Right lobe of liver (tissue), 6 donors: ENCODE measurements at regions of chr1 and their contacts with region 1.

Region 1: DNA sequence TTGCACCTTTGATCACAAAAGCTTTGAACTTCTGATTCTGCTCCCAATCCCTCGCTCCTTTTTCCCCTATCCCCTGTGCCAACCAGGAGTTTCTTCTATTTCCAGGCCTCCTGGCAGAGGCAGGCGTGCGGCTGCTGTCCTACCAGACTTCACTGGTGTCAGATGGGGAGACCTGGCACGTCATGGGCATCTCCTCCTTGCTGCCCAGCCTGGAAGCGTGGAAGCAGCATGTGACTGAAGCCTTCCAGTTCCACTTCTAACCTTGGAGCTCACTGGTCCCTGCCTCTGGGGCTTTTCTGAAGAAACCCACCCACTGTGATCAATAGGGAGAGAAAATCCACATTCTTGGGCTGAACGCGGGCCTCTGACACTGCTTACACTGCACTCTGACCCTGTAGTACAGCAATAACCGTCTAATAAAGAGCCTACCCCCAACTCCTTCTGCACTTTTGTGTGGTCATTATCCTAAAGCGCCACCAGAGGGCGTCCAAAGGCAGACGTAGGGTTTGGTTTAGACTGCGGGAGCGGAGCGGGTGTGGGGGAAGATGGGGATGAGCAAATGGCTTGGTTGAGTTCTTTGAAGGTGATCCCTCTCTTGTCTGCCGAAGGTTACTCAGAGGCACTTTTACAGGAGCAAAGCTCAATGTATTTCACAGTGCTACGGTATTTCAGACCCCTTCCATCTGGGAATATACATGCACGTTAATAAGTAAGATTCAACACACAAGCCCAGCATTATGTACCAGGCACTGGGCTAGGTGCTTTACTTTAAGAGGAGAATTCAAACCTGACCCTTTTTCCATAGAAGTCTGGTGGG is 24.7 kb downstream of the HMGCS2 start:
- DNase-seq: peak; percentile 64 to 77 (median 75)
- ATAC-seq: peak; percentile 72 to 75 (median 74)
- H3K4me3 ChIP-seq: no peak overlapping the region
- H3K27ac ChIP-seq: peak overlapping the region in 2 of 3 donors; percentile 3 to 45
- H3K4me1 ChIP-seq: peaks cover 0 to 54% (median 14%) of the 10 kb centered on the region in 4 donors
- H3K27me3 ChIP-seq: no peaks in the 10 kb centered on the region
- CTCF ChIP-seq: peak; percentile 76 to 86 (median 84)
- POLR2A ChIP-seq: no peak

Region 2: DNA sequence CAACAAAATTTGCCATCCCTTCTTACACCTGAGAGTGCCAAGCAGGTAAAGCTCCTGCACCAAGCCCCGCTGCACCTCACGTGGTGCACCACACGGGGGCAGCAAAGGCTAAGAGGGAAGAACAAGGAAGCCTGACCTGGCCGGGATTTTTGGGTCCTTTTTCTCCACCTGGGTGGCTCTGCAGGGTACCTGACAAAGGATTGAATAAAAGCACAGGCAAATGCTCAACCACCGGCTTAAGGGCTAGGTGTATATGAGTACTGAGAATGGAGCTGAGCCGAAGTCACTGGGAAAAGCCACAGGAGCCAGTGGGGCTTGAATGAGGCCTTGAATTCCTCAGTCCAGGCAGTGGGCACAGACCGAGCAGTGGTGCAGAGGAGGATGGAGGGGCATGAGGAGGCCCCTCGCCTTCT is 132.3 kb before region 1 on chr1:
- intact Hi-C with region 1: no loop called
- DNase-seq: peak; percentile 81 to 88 (median 84)
- ATAC-seq: peak; percentile 84 to 89 (median 86)
- H3K4me3 ChIP-seq: no peak overlapping the region
- H3K27ac ChIP-seq: no peak overlapping the region
- H3K4me1 ChIP-seq: no peaks in the 10 kb centered on the region
- H3K27me3 ChIP-seq: no peaks in the 10 kb centered on the region
- CTCF ChIP-seq: peak; percentile 84 to 96 (median 94)
- POLR2A ChIP-seq: no peak

Region 3: DNA sequence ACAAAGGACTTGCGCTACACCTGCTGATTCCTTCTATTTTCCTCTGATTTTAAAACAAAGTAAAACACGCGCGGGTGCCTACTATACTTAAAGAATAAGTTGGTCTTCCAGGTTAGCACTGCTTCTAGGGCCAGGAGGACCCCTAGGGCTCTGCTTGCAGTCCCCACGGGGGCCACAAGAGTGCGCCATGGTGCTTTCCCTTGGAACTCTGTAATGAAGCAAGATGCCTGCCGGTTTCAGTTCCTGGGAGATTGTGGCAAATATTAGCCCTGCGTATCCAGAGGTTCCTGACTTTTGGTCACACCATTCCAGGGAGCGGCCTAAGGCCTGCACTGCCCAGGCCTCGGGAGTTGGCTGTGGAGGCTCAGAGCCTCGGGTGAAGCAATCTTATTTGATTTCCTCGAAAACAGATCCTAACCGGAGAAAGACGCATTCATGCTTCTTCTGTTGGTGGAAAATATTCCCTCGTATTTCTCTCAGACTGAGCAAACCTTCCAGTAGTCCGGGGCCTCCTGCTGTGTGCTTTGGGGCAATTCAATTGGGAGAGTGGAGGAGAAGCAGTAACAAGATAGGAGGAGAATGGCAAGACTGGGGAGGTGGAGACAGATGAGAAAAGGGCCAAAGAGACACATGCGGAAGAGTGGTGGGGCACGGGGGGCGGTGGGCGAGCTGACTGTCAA is 127.1 kb after region 1 on chr1:
- intact Hi-C with region 1: loop called in 1 of 2 experiments (anchors 10 kb)
- DNase-seq: peak; percentile 65 to 80 (median 68)
- ATAC-seq: peak; percentile 95 to 97 (median 96)
- H3K4me3 ChIP-seq: no peak overlapping the region
- H3K27ac ChIP-seq: peak overlapping the region in 1 of 3 donors; percentile 37
- H3K4me1 ChIP-seq: no peaks in the 10 kb centered on the region
- H3K27me3 ChIP-seq: no peaks in the 10 kb centered on the region
- CTCF ChIP-seq: peak; percentile 83 to 97 (median 94)
- POLR2A ChIP-seq: no peak